ENCODE measurements at regions of chr11 and their contacts with region 1.

Region 1: GRCh38 chr11:117796872-117797529 is at the start of gene DSCAML1:
- DNase-seq: peak in 9 of 10 donors; percentile 62 to 86 (median 71)
- H3K4me3 ChIP-seq: peak within 1 kb of the TSS; percentile 45 to 93 (median 80)
- H3K27ac ChIP-seq: peak within 1 kb of the TSS in 56 of 59 donors; percentile 29 to 94 (median 85)
- H3K27me3 ChIP-seq: peaks cover 0 to 18% (median 0%) of the 10 kb centered on the region in 45 donors
- CTCF ChIP-seq: peak in 7 of 56 donors; percentile 10 to 27 (median 18)
- total RNA-seq, gene DSCAML1: 16.1 to 61.7 (median 35.6) TPM

Region 2: DNA sequence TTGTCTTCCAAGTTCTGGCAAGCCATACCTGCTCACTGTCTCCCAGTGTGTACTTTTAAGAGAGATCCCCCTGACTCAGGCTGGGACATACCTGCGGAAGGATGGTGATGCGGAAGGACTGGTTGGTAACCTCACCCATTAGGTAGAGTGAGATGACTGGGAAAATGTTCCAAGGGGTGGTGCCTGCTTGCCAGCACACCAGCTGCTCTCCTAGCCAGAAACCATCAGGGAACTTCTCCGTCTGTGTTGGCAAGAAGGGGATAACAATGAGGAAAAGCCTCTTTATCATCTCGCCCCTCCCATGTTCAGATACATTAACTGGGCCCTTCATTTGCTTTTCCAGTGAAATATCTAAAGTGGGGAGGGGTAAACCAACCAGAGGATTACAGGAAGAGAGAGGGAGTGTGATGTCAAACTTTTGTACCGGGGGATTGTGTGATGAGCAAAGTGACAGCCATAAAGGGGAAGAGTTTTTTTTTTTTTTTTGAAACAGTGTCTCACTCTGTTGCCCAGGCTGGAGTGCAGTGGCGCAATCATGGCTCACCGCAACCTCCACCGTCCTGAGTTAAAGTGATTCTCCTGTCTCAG is 506.1 kb before region 1 on chr11 and contains the start of gene BACE1-AS:
- intact Hi-C with region 1: no loop called
- DNase-seq: no peak
- H3K4me3 ChIP-seq: no peak within 1 kb of the TSS
- H3K27ac ChIP-seq: peak within 1 kb of the TSS in 25 of 59 donors; percentile 2 to 100 (median 65)
- H3K27me3 ChIP-seq: no peaks in the 10 kb centered on the region
- CTCF ChIP-seq: no peak
- total RNA-seq, gene BACE1-AS: 10.4 to 23.0 (median 15.6) TPM

Region 3: GRCh38 chr11:117663821-117664220 is 133.2 kb before region 1 on chr11:
- intact Hi-C with region 1: loop called (anchors 5 kb)
- DNase-seq: peak in 7 of 10 donors; percentile 66 to 81 (median 76)
- H3K4me3 ChIP-seq: peak overlapping the region in 33 of 59 donors; percentile 0 to 49 (median 17)
- H3K27ac ChIP-seq: peak overlapping the region; percentile 73 to 99 (median 96)
- H3K27me3 ChIP-seq: no peaks in the 10 kb centered on the region
- CTCF ChIP-seq: peak in 19 of 56 donors; percentile 7 to 47 (median 19)

Region 4: GRCh38 chr11:117678658-117679406 is 118.2 kb before region 1 on chr11:
- intact Hi-C with region 1: loop called in 1 of 2 experiments (anchors 5 kb)
- DNase-seq: peak in 8 of 10 donors; percentile 62 to 84 (median 70)
- H3K4me3 ChIP-seq: no peak overlapping the region
- H3K27ac ChIP-seq: peak overlapping the region; percentile 73 to 99 (median 96)
- H3K27me3 ChIP-seq: no peaks in the 10 kb centered on the region
- CTCF ChIP-seq: peak in 1 of 56 donors; percentile 3

Region 5: DNA sequence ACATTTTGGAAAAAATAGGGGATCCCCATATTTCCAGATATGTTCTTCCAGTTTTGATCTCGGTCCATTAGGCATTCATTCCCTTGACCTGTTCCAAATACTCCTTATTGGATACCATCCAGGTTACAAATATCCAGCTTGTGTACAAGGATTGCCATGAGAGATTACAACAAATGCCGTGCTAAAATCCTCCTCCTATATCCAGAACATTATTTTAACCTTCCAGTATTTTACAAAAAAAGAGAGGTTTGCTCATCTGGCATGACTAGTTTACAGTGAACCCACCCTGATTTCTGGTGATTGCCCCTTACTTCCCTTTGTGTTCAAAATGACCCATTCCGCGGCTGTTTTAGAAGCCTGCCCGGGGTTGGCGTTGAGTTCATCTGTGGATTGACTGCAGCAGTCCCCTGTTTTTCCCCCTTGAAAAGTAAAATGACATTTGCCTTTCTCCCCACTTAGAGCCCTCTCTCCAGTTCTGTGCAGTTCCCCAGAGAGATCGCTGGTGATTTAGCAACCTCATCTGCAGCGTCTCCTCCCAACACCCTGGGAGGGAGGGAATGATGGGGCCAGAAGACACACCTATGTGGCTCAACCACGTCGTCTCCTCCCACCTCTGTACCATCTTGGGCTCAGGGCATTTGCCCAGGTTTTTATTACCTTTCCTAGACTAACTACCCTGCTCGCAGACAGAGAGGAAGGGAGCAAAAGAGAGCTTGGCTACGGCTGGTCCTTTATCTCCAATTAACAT is 73.5 kb before region 1 on chr11:
- intact Hi-C with region 1: loop called in 1 of 2 experiments (anchors 2 kb)
- DNase-seq: peak in 1 of 10 donors; percentile 12
- H3K4me3 ChIP-seq: peak overlapping the region in 1 of 59 donors; percentile 13
- H3K27ac ChIP-seq: peak overlapping the region in 58 of 59 donors; percentile 45 to 100 (median 88)
- H3K27me3 ChIP-seq: no peaks in the 10 kb centered on the region
- CTCF ChIP-seq: no peak

Region 6: GRCh38 chr11:117734601-117735024 is 62.4 kb before region 1 on chr11:
- intact Hi-C with region 1: loop called in 1 of 2 experiments (anchors 5 kb)
- DNase-seq: peak in 5 of 10 donors; percentile 50 to 65 (median 59)
- H3K4me3 ChIP-seq: no peak overlapping the region
- H3K27ac ChIP-seq: peak overlapping the region; percentile 51 to 98 (median 93)
- H3K27me3 ChIP-seq: no peaks in the 10 kb centered on the region
- CTCF ChIP-seq: no peak

Region 7: GRCh38 chr11:117771197-117771596 is 25.8 kb before region 1 on chr11:
- intact Hi-C with region 1: loop called in 1 of 2 experiments (anchors 2 kb)
- DNase-seq: peak in 8 of 10 donors; percentile 49 to 87 (median 76)
- H3K4me3 ChIP-seq: no peak overlapping the region
- H3K27ac ChIP-seq: peak overlapping the region in 58 of 59 donors; percentile 59 to 97 (median 87)
- H3K27me3 ChIP-seq: no peaks in the 10 kb centered on the region
- CTCF ChIP-seq: peak in 7 of 56 donors; percentile 8 to 34 (median 18)

Measured in dorsolateral prefrontal cortex (tissue), 120 donors.